Aorta (tissue), 5 donors: ENCODE measurements at regions of chr11 and their contacts with region 1.

Region 1: GRCh38 chr11:73779084-73779902 is 8.4 kb upstream of the MRPL48 start:
- DNase-seq: peak; percentile 100
- ATAC-seq: peak; percentile 100
- H3K4me3 ChIP-seq: peak overlapping the region; percentile 11 to 44
- H3K27ac ChIP-seq: peak overlapping the region; percentile 62 to 64
- H3K4me1 ChIP-seq: no peaks in the 10 kb centered on the region
- H3K27me3 ChIP-seq: no peaks in the 10 kb centered on the region

Region 2: DNA sequence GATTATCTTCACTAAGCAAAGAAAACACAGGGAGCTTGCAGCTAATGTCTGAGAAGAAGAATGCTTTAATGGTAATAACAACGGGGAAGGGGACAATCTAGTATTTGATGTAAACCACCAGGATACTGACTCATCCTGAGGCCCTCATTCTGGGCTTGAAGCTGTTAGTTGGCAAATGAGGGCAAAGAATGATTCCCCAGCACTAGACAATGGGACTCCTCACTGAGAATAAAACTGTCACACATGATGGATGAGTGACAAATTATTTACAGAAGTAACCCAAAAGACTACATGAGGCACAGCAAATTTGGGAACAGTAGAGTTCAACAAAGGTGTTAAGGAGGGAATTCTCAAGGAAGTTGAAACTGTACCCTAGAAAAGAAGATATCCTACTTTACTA is 257.7 kb before region 1 on chr11:
- intact Hi-C with region 1: no loop called
- DNase-seq: no peak
- ATAC-seq: no peak
- H3K4me3 ChIP-seq: no peak overlapping the region
- H3K27ac ChIP-seq: no peak overlapping the region
- H3K4me1 ChIP-seq: no peaks in the 10 kb centered on the region
- H3K27me3 ChIP-seq: no peaks in the 10 kb centered on the region

Region 3: GRCh38 chr11:73671701-73672100 is 107.6 kb before region 1 on chr11:
- intact Hi-C with region 1: no loop called
- DNase-seq: no peak
- ATAC-seq: no peak
- H3K4me3 ChIP-seq: no peak overlapping the region
- H3K27ac ChIP-seq: no peak overlapping the region
- H3K4me1 ChIP-seq: no peaks in the 10 kb centered on the region
- H3K27me3 ChIP-seq: no peaks in the 10 kb centered on the region

Region 4: GRCh38 chr11:73716101-73717056 is 62.9 kb before region 1 on chr11:
- intact Hi-C with region 1: no loop called
- DNase-seq: no peak
- ATAC-seq: no peak
- H3K4me3 ChIP-seq: no peak overlapping the region
- H3K27ac ChIP-seq: no peak overlapping the region
- H3K4me1 ChIP-seq: no peaks in the 10 kb centered on the region
- H3K27me3 ChIP-seq: no peaks in the 10 kb centered on the region

Region 5: GRCh38 chr11:73760679-73761402 is 18.5 kb before region 1 on chr11 and contains the start of gene RAB6A:
- intact Hi-C with region 1: loop called (anchors 1 kb)
- DNase-seq: peak; percentile 100
- ATAC-seq: peak; percentile 97
- H3K4me3 ChIP-seq: peak within 1 kb of the TSS; percentile 87 to 96
- H3K27ac ChIP-seq: peak within 1 kb of the TSS; percentile 71 to 84
- H3K4me1 ChIP-seq: no peaks in the 10 kb centered on the region
- H3K27me3 ChIP-seq: no peaks in the 10 kb centered on the region
- total RNA-seq, gene RAB6A: 144 to 148 TPM